Transverse colon (tissue), 4 donors: ENCODE measurements at regions of chr14 and their contacts with region 1.

Region 1: GRCh38 chr14:31084385-31084784 is 58.2 kb upstream of the STRN3 start:
- DNase-seq: no peak
- H3K4me3 ChIP-seq: no peak overlapping the region
- H3K27ac ChIP-seq: peak overlapping the region in 1 of 4 donors; percentile 7
- H3K4me1 ChIP-seq: peaks cover 0 to 3% (median 0%) of the 10 kb centered on the region in 4 donors
- H3K27me3 ChIP-seq: no peaks in the 10 kb centered on the region
- CTCF ChIP-seq: no peak
- EP300 ChIP-seq: no peak
- POLR2A ChIP-seq: no peak

Region 2: GRCh38 chr14:29814156-29815015 is 1270.0 kb before region 1 on chr14:
- in situ Hi-C with region 1: no loop called
- intact Hi-C with region 1: no loop called
- DNase-seq: peak; percentile 10
- H3K4me3 ChIP-seq: no peak overlapping the region
- H3K27ac ChIP-seq: no peak overlapping the region
- H3K4me1 ChIP-seq: peaks cover 0 to 7% (median 0%) of the 10 kb centered on the region in 4 donors
- H3K27me3 ChIP-seq: no peaks in the 10 kb centered on the region
- CTCF ChIP-seq: no peak
- EP300 ChIP-seq: no peak
- POLR2A ChIP-seq: no peak

Region 3: GRCh38 chr14:30982533-30982932 is 101.9 kb before region 1 on chr14:
- in situ Hi-C with region 1: loop called in 3 of 4 experiments (anchors 10 to 25 kb)
- intact Hi-C with region 1: loop called (anchors 5 kb)
- DNase-seq: no peak
- H3K4me3 ChIP-seq: no peak overlapping the region
- H3K27ac ChIP-seq: no peak overlapping the region
- H3K4me1 ChIP-seq: peaks cover 8 to 28% (median 13%) of the 10 kb centered on the region in 4 donors
- H3K27me3 ChIP-seq: no peaks in the 10 kb centered on the region
- CTCF ChIP-seq: no peak
- EP300 ChIP-seq: no peak
- POLR2A ChIP-seq: no peak

Region 4: DNA sequence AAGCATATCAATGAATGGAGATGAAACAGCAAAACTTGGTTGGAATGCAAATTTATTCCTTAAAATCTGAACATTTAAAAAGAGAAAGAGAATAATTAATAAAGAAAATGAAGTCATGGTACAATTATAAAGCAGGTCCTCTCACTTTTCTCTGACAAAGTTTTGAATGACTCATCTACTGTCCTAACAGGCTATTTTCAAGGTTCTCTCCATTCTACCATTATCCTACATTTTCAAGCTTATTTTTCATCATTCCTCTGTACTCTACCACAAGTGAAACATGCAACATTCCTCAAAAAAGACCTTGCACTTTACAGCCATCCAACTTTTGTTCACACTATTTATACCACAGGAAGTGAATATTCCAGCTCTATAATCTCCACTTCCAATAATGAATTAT is 95.9 kb before region 1 on chr14:
- in situ Hi-C with region 1: loop called in 3 of 4 experiments (anchors 10 to 25 kb)
- intact Hi-C with region 1: loop called (anchors 5 kb)
- DNase-seq: no peak
- H3K4me3 ChIP-seq: no peak overlapping the region
- H3K27ac ChIP-seq: peak overlapping the region; percentile 3 to 50 (median 14)
- H3K4me1 ChIP-seq: peaks cover 6 to 43% (median 16%) of the 10 kb centered on the region in 4 donors
- H3K27me3 ChIP-seq: no peaks in the 10 kb centered on the region
- CTCF ChIP-seq: no peak
- EP300 ChIP-seq: no peak
- POLR2A ChIP-seq: no peak

Region 5: DNA sequence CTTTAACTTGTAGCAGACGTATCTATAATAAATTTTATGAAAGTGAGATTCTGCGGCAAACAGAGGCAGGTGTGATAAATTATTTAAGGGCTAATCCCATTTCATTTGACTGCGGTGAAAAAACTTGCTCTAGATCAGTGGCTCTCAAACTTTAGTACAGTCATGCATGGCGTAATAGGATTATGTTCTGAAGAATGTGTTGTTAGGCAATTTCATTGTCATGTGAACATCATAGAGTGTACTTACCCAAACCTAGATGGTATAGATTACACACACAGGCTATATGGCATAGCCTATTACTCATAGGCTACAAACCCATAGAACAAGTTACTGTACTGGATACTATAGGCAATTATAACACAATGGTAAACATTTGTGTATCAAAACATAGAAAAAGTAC is 252.3 kb after region 1 on chr14:
- in situ Hi-C with region 1: no loop called
- intact Hi-C with region 1: no loop called
- DNase-seq: no peak
- H3K4me3 ChIP-seq: no peak overlapping the region
- H3K27ac ChIP-seq: no peak overlapping the region
- H3K4me1 ChIP-seq: peaks cover 0 to 20% (median 9%) of the 10 kb centered on the region in 4 donors
- H3K27me3 ChIP-seq: no peaks in the 10 kb centered on the region
- CTCF ChIP-seq: no peak
- EP300 ChIP-seq: no peak
- POLR2A ChIP-seq: no peak